Vagina (tissue), 2 donors: ENCODE measurements at regions of chr10 and their contacts with region 1.

Region 1: GRCh38 chr10:44932517-44933450 is 21.6 kb downstream of the TMEM72 start:
- DNase-seq: no peak
- H3K4me3 ChIP-seq: no peak overlapping the region
- H3K27ac ChIP-seq: peak overlapping the region; percentile 13
- H3K4me1 ChIP-seq: peaks cover 22% of the 10 kb centered on the region
- H3K27me3 ChIP-seq: no peaks in the 10 kb centered on the region
- CTCF ChIP-seq: peak; percentile 84 to 93 (median 92)
- POLR2A ChIP-seq: no peak

Region 2: GRCh38 chr10:44974628-44975431 is 42.0 kb after region 1 on chr10:
- intact Hi-C with region 1: loop called (anchors 5 kb)
- DNase-seq: no peak
- H3K4me3 ChIP-seq: peak overlapping the region; percentile 41 to 54
- H3K27ac ChIP-seq: peak overlapping the region; percentile 95
- H3K4me1 ChIP-seq: peaks cover 47% of the 10 kb centered on the region
- H3K27me3 ChIP-seq: no peaks in the 10 kb centered on the region
- CTCF ChIP-seq: peak; percentile 65 to 99 (median 97)
- POLR2A ChIP-seq: no peak

Region 3: GRCh38 chr10:45080331-45080730 is 147.5 kb after region 1 on chr10:
- intact Hi-C with region 1: no loop called
- DNase-seq: no peak
- H3K4me3 ChIP-seq: no peak overlapping the region
- H3K27ac ChIP-seq: no peak overlapping the region
- H3K4me1 ChIP-seq: no peaks in the 10 kb centered on the region
- H3K27me3 ChIP-seq: no peaks in the 10 kb centered on the region
- CTCF ChIP-seq: no peak
- POLR2A ChIP-seq: no peak

Region 4: GRCh38 chr10:45160271-45160670 is 227.5 kb after region 1 on chr10:
- intact Hi-C with region 1: no loop called
- DNase-seq: no peak
- H3K4me3 ChIP-seq: no peak overlapping the region
- H3K27ac ChIP-seq: no peak overlapping the region
- H3K4me1 ChIP-seq: no peaks in the 10 kb centered on the region
- H3K27me3 ChIP-seq: no peaks in the 10 kb centered on the region
- CTCF ChIP-seq: no peak
- POLR2A ChIP-seq: no peak